Activated CD4-positive, alpha-beta T cell treated with anti-CD3 and anti-CD28 coated beads for 36 hours (primary cell): ENCODE measurements at regions of chr2 and their contacts with region 1.

Region 1: DNA sequence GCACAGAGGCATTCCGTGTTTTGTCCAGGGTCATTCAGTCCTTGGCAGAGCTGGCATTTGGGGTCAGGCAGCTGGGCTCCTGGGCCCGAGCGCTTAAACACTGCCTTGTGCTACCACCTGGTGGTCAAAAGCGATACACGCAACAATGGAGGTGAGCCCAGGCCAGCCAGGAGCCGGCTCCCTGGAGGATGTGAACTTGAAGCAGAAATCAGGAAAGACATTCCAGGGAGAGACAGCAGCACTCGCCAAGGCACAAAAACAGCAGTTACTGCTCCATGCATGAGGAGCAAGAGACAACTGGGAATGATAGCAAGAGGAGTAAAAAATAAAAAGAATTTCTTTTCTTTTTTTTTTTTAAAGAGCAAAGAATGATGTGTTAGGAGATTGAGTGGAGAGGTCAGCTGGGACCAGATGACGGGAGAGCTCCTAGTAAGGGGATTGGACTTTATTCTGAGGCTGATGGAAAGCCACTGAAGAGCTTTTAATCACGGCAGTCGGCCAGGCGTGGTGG is 20.7 kb downstream of the SCYGR8 start:
- DNase-seq: peak; percentile 78
- ATAC-seq: peak; percentile 92
- H3K4me3 Mint-ChIP-seq: no peak overlapping the region
- H3K27ac Mint-ChIP-seq: no peak overlapping the region
- H3K4me1 Mint-ChIP-seq: no peaks in the 10 kb centered on the region
- H3K27me3 Mint-ChIP-seq: no peaks in the 10 kb centered on the region

Region 2: DNA sequence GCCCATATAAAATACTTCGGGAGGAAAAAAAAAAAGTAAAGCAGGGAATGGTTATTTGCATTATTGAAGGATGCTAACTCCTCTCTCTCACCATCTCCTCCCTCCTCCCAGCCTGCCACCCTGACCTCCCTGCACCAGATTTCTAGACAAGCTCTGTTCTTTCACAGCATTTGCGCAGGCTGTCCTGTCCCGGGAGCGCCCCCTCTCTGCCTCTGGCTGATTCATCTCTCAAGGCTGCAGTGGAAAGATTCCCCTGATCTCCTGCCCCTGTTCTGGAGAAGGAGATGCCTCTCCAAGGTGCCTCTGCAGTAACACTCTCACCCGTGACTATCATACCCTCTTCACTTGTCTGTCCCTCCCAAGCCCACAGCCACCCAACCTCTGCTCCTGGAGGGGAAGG is 640.9 kb before region 1 on chr2:
- CTCF ChIA-PET with region 1: interaction called, 4 read pairs
- POLR2A ChIA-PET with region 1: no interaction called
- intact Hi-C with region 1: loop called (anchors 1 to 2 kb)
- DNase-seq: peak; percentile 8
- ATAC-seq: no peak
- H3K4me3 Mint-ChIP-seq: no peak overlapping the region
- H3K27ac Mint-ChIP-seq: no peak overlapping the region
- H3K4me1 Mint-ChIP-seq: no peaks in the 10 kb centered on the region
- H3K27me3 Mint-ChIP-seq: peaks cover 15% of the 10 kb centered on the region

Region 3: DNA sequence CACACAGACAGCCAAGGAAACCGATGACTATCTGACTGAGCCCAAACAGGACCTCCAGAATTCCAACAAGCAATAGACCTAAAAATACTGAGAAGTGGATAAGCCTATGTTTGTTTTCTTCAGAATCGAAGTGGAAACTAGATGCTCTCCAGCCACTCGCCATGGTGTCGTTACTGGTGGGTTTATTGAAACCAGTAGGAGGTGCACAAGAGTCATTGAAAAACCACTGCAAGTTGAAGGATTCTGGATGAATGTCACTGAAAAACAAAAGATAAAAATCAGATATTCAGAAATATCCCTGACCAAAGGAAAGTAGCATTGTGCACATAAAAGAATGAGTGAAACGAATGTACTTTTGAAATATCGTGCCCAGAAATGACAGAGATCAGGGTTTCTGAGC is 402.7 kb before region 1 on chr2:
- CTCF ChIA-PET with region 1: no interaction called
- POLR2A ChIA-PET with region 1: no interaction called
- intact Hi-C with region 1: loop called in 1 of 2 experiments (anchors 5 kb)
- DNase-seq: no peak
- ATAC-seq: no peak
- H3K4me3 Mint-ChIP-seq: no peak overlapping the region
- H3K27ac Mint-ChIP-seq: no peak overlapping the region
- H3K4me1 Mint-ChIP-seq: peaks cover 2% of the 10 kb centered on the region
- H3K27me3 Mint-ChIP-seq: no peaks in the 10 kb centered on the region

Region 4: GRCh38 chr2:227471924-227472264 is 294.5 kb before region 1 on chr2 and contains the start of gene AGFG1:
- CTCF ChIA-PET with region 1: interaction called, 6 read pairs
- POLR2A ChIA-PET with region 1: no interaction called
- intact Hi-C with region 1: loop called (anchors 2 kb)
- DNase-seq: peak; percentile 91
- ATAC-seq: peak; percentile 82
- H3K4me3 Mint-ChIP-seq: peak within 1 kb of the TSS; percentile 94
- H3K27ac Mint-ChIP-seq: peak within 1 kb of the TSS; percentile 87
- H3K4me1 Mint-ChIP-seq: peaks cover 48% of the 10 kb centered on the region
- H3K27me3 Mint-ChIP-seq: no peaks in the 10 kb centered on the region
- total RNA-seq, gene AGFG1: 158 to 214 TPM

Region 5: GRCh38 chr2:227783404-227784138 is 17.1 kb after region 1 on chr2:
- CTCF ChIA-PET with region 1: interaction called, 13 read pairs
- POLR2A ChIA-PET with region 1: no interaction called
- intact Hi-C with region 1: no loop called
- DNase-seq: peak; percentile 21
- ATAC-seq: peak; percentile 87
- H3K4me3 Mint-ChIP-seq: peak overlapping the region; percentile 65
- H3K27ac Mint-ChIP-seq: peak overlapping the region; percentile 68
- H3K4me1 Mint-ChIP-seq: peaks cover 18% of the 10 kb centered on the region
- H3K27me3 Mint-ChIP-seq: peaks cover 17% of the 10 kb centered on the region